Activated naive CD4-positive, alpha-beta T cell treated with anti-CD3 and anti-CD28 coated beads for 36 hours (primary cell): ENCODE measurements at regions of chr4 and their contacts with region 1.

Region 1: DNA sequence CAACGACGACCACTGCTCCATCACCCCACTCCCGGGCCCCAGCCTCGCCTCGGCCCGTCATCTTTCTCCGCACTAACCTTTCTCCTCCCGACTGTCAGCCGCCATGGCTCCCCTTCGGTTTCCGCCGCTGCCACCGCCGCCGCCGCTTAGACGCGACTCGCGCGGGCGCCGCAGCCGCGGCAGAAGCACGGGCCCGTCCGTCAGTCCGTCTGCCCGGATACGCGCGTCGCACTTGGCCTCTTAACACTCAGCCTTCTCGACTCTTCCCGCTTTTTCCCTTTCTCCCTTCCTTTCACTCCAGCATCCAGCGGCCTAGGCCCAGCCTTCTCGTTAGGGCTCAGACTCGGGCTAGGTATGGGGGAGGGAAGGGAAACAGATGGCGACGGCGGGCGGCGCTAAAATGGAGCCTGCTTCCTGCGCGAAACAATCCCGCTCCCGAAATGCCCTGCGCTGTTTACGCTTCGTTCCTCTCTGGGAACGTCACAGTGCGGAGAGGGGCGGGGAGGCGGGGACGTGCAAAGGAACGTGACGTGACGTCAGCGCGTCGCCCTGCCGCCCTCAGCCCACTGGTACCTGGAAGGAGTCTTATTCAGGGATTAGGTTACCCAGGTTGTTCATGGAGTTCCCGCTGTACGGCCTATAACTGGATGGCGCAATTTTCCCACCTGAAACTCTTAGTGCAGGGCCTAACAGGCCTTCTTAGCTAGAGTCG is at the start of gene YTHDC1:
- DNase-seq: peak; percentile 98
- H3K4me3 Mint-ChIP-seq: peak within 1 kb of the TSS; percentile 97
- H3K27ac Mint-ChIP-seq: peak within 1 kb of the TSS; percentile 99
- H3K4me1 Mint-ChIP-seq: peaks cover 29% of the 10 kb centered on the region
- H3K27me3 Mint-ChIP-seq: no peaks in the 10 kb centered on the region
- total RNA-seq, gene YTHDC1: 76.3 to 81.0 TPM

Region 2: GRCh38 chr4:67700738-67701516 is 648.9 kb before region 1 on chr4 and contains the start of gene UBA6:
- CTCF ChIA-PET with region 1: no interaction called
- intact Hi-C with region 1: loop called (anchors 2 kb)
- DNase-seq: peak; percentile 97
- H3K4me3 Mint-ChIP-seq: peak within 1 kb of the TSS; percentile 91
- H3K27ac Mint-ChIP-seq: peak within 1 kb of the TSS; percentile 96
- H3K4me1 Mint-ChIP-seq: peaks cover 48% of the 10 kb centered on the region
- H3K27me3 Mint-ChIP-seq: no peaks in the 10 kb centered on the region
- total RNA-seq, gene UBA6: 71.6 to 79.5 TPM

Region 3: DNA sequence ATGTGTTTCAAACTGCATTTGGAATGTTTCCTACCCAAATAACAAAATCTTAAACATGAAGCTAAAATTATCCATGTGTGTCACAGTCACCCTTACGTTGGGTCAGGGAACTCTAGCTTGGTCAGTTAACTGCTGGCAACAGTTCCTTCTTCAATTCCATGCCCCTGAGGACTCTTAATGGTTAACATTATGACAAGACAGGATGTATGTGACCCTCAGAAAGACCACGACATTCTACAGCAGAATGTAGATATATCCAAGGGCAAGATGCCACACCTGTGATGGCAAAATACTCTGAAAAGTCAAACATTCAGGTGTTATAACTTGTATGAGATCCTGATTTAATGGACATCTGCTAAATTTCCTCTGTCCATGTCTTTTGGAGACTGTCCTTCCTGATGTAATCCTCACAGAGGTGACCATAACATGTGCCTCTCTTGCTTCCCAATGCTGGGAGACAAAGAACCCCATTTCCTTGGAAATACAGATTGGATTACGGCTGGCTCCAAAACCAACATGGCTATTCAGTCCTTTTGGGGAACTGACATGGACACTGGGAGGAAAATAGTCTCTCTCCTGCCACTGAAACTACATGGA is 39.1 kb before region 1 on chr4:
- CTCF ChIA-PET with region 1: no interaction called
- intact Hi-C with region 1: loop called (anchors 5 kb)
- DNase-seq: no peak
- H3K4me3 Mint-ChIP-seq: no peak overlapping the region
- H3K27ac Mint-ChIP-seq: no peak overlapping the region
- H3K4me1 Mint-ChIP-seq: no peaks in the 10 kb centered on the region
- H3K27me3 Mint-ChIP-seq: no peaks in the 10 kb centered on the region

Region 4: DNA sequence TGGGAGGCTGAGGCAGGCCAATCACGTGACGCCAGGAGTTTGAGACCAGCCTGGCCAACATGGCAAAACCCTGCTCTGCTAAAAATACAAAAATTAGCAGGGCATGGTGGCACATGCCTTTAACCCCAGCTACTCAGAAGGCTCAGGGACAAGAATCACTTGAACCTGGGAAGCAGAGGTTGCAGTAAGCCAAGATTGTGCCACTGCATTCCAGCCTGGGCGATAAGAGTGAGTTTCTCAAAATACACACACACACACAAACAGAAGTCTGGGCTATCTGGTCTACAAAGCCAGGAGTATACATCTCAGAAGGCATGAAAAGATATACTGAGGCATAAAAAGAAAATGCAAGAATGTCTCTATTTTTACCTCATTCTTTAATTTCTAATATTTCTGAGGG is 11.2 kb before region 1 on chr4:
- CTCF ChIA-PET with region 1: interaction called, 4 read pairs
- intact Hi-C with region 1: loop called (anchors 2 kb)
- DNase-seq: no peak
- H3K4me3 Mint-ChIP-seq: no peak overlapping the region
- H3K27ac Mint-ChIP-seq: no peak overlapping the region
- H3K4me1 Mint-ChIP-seq: peaks cover 56% of the 10 kb centered on the region
- H3K27me3 Mint-ChIP-seq: no peaks in the 10 kb centered on the region

Region 5: GRCh38 chr4:68434836-68435235 is 85.0 kb after region 1 on chr4:
- CTCF ChIA-PET with region 1: no interaction called
- intact Hi-C with region 1: loop called (anchors 5 kb)
- DNase-seq: no peak
- H3K4me3 Mint-ChIP-seq: no peak overlapping the region
- H3K27ac Mint-ChIP-seq: no peak overlapping the region
- H3K4me1 Mint-ChIP-seq: peaks cover 27% of the 10 kb centered on the region
- H3K27me3 Mint-ChIP-seq: no peaks in the 10 kb centered on the region